ENCODE measurements at regions of chr2 and their contacts with region 1.

Region 1: DNA sequence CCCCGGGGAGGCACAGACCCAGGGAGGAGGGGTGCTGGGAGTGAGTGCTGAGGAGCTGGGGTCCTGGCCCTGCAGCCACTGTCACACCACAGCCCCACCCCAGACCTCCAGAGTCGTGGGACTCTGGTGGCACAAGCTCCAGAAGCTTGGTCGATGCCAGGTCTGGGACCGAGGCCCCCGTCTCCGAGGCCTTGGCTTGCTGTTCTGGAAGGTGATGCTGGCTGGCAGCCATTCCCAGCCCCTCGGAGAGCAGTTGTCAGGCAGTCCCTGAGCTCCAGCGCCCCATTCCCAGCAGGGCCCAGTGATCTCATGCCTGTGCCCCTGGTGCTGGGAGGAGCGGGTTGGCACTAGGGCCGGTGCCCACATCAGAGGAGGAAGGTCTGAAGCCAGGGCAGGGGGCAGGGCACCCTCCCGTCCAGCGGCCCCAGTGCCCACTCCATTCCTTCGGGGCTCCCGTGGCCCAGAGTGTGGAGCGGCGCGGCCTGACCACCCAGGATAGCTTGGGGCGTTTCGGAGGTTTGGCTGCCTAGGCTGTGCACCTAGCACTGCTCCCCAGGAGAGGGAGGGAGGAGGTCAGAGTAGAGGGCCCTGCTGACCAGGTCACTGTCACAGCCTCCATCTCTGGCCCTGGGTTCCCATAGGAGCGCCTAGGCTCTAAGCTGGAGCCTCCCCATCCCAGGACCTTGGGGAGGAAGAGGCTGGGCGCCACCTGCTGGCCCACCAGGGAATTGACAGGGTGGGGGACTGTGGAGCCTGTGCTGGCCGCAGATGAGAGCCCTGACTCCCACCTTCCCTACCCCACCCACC is 16.8 kb upstream of the ALPI start:
- DNase-seq: peak in 1 of 3 donors; percentile 47
- ATAC-seq: peak; percentile 26 to 45 (median 35)
- H3K4me3 ChIP-seq: no peak overlapping the region
- H3K27ac ChIP-seq: no peak overlapping the region
- H3K4me1 ChIP-seq: peaks cover 0 to 4% (median 2%) of the 10 kb centered on the region in 4 donors
- H3K27me3 ChIP-seq: no peaks in the 10 kb centered on the region
- CTCF ChIP-seq: peak; percentile 42 to 61 (median 54)
- POLR2A ChIP-seq: no peak

Region 2: DNA sequence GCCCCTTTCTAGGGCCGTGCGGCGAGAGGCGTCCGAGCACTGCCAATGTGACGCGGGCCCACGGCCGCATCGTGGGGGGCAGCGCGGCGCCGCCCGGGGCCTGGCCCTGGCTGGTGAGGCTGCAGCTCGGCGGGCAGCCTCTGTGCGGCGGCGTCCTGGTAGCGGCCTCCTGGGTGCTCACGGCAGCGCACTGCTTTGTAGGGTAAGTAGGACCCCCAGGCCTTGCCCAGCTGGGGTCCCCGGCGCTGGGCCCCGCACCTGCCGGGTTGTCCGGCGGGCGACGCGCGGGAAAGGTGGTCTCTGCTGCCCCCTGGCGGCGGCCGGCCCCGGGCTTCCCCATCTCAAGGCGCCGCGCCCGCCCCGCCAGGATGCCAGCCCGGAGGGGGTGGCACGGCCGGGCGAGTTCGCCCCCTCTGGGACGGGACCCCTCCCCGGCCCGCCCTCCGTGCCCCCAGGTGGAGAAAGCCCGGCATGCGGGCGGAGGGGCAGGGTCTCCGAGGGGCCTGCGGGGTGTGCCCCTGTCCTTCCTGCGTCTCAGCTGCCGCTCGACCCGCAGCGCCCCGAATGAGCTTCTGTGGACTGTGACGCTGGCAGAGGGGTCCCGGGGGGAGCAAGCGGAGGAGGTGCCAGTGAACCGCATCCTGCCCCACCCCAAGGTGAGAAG is 82.9 kb after region 1 on chr2:
- intact Hi-C with region 1: loop called in 1 of 2 experiments (anchors 10 kb)
- DNase-seq: peak in 2 of 3 donors; percentile 62 to 63
- ATAC-seq: peak; percentile 61 to 88 (median 74)
- H3K4me3 ChIP-seq: peak overlapping the region in 1 of 3 donors; percentile 19
- H3K27ac ChIP-seq: no peak overlapping the region
- H3K4me1 ChIP-seq: peaks cover 0 to 20% (median 0%) of the 10 kb centered on the region in 4 donors
- H3K27me3 ChIP-seq: peaks cover 14 to 27% of the 10 kb centered on the region in 2 donors
- CTCF ChIP-seq: peak; percentile 86 to 94 (median 90)
- POLR2A ChIP-seq: no peak